ENCODE measurements at regions of chr3 and their contacts with region 1.

Region 1: GRCh38 chr3:184185461-184186308 is at the start of gene ABCF3:
- DNase-seq: peak; percentile 99
- H3K4me3 ChIP-seq: peak within 1 kb of the TSS; percentile 93 to 96 (median 94)
- H3K27ac ChIP-seq: peak within 1 kb of the TSS; percentile 88 to 91
- H3K4me1 ChIP-seq: peaks cover 0 to 18% of the 10 kb centered on the region in 2 donors
- H3K27me3 ChIP-seq: no peaks in the 10 kb centered on the region
- CTCF ChIP-seq: no peak
- POLR2A ChIP-seq: peak; percentile 71
- total RNA-seq, gene ABCF3: 59.4 to 77.4 (median 71.8) TPM

Region 2: GRCh38 chr3:183680061-183680460 is 505.6 kb before region 1 on chr3:
- intact Hi-C with region 1: no loop called
- DNase-seq: no peak
- H3K4me3 ChIP-seq: no peak overlapping the region
- H3K27ac ChIP-seq: no peak overlapping the region
- H3K4me1 ChIP-seq: no peaks in the 10 kb centered on the region
- H3K27me3 ChIP-seq: no peaks in the 10 kb centered on the region
- CTCF ChIP-seq: no peak
- POLR2A ChIP-seq: no peak

Region 3: DNA sequence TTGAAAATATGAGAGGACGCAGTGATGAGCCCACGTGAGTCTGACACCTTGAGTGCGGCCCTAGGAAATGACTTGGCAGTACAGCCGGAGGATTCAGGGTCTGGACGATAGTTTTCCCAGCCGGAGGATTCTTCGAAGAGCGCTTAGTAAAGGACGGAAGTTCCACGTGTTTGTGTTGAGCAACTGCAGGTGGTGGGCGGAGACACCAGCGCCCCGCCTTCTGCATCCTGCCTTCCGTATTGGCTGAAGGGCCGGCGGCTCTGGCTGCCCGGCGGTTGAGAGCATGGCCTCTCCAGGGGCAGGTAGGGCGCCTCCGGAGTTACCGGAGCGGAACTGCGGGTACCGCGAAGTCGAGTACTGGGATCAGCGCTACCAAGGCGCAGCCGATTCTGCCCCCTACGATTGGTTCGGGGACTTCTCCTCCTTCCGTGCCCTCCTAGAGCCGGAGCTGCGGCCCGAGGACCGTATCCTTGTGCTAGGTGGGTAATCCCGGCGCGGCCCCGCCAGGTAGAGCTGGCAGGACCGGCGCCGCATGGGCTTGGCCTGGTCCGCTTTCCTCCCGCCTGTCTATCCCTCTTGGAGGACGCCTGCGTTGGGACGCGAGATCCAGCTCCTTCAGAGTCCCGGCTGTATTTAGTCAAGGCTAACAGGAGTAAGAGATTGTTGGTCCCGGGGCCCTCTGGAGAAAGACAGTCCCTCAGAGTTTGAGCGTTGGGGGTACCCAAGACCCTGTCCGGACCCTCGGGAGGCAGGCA is 63.9 kb after region 1 on chr3 and contains the start of gene EEF1AKMT4:
- intact Hi-C with region 1: loop called (anchors 10 kb)
- DNase-seq: peak; percentile 95 to 96
- H3K4me3 ChIP-seq: peak within 1 kb of the TSS; percentile 81 to 91 (median 88)
- H3K27ac ChIP-seq: peak within 1 kb of the TSS; percentile 74 to 86
- H3K4me1 ChIP-seq: peaks cover 0 to 3% of the 10 kb centered on the region in 2 donors
- H3K27me3 ChIP-seq: no peaks in the 10 kb centered on the region
- CTCF ChIP-seq: peak; percentile 44 to 56 (median 49)
- POLR2A ChIP-seq: no peak
- total RNA-seq, gene EEF1AKMT4: 3.4 to 9.7 (median 6.2) TPM

Measured in breast epithelium (tissue), 4 donors.